ENCODE measurements at regions of chr15 and their contacts with region 1.

Region 1: DNA sequence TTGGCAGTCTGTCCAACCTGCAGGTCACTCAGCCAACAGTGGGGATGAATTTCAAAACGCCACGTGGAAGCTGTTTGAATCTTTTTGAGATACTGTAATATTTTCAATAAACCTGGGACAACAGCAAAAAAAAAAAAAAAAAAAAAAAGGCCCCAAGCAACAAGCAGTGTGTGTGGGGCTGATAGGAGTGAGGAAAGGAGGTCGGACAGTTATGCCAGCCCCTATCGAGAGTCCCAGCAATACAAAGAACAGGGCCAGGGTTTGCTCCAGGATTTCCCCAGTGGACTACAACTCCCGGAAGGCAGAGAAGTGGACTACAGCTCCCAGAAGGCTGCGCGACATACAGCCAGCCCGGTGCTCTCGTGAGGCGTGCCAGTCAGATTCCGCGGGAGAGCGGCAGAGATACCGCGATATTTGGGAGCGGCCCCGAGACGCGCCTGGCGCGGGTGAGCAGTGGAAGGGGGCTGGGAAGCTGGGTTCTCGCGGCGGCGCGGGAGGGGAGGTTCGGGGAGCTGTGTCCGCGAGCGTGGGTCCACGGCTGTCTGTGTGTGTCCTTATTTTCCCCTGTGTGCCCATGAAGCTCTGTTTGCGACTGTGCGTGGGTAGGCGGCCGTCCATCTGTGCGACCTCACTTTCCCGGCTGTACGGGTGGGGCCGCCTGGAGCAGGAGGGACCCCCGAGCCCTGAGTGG is at the start of gene PPCDC:
- DNase-seq: peak; percentile 82 to 95 (median 90)
- ATAC-seq: peak; percentile 100
- H3K4me3 ChIP-seq: peak within 1 kb of the TSS; percentile 91 to 93
- H3K4me3 Mint-ChIP-seq: peak within 1 kb of the TSS; percentile 87 to 99 (median 92)
- H3K27ac ChIP-seq: peak within 1 kb of the TSS; percentile 60
- H3K27ac Mint-ChIP-seq: peak within 1 kb of the TSS; percentile 83 to 94
- H3K4me1 ChIP-seq: peaks cover 5 to 24% of the 10 kb centered on the region in 2 experiments
- H3K4me1 Mint-ChIP-seq: peaks cover 19 to 25% (median 20%) of the 10 kb centered on the region in 3 donors
- H3K27me3 ChIP-seq: no peaks in the 10 kb centered on the region
- H3K27me3 Mint-ChIP-seq: no peaks in the 10 kb centered on the region
- total RNA-seq, gene PPCDC: 9.3 to 14.3 (median 11.8) TPM

Region 2: GRCh38 chr15:74913041-74913440 is 110.3 kb before region 1 on chr15:
- CTCF ChIA-PET with region 1: no interaction called
- POLR2A ChIA-PET with region 1: no interaction called
- DNase-seq: no peak
- ATAC-seq: no peak
- H3K4me3 ChIP-seq: no peak overlapping the region
- H3K4me3 Mint-ChIP-seq: no peak overlapping the region
- H3K27ac ChIP-seq: no peak overlapping the region
- H3K27ac Mint-ChIP-seq: no peak overlapping the region
- H3K4me1 ChIP-seq: no peaks in the 10 kb centered on the region
- H3K4me1 Mint-ChIP-seq: peaks cover 0 to 2% (median 0%) of the 10 kb centered on the region in 3 donors
- H3K27me3 ChIP-seq: no peaks in the 10 kb centered on the region
- H3K27me3 Mint-ChIP-seq: no peaks in the 10 kb centered on the region

Region 3: GRCh38 chr15:75008629-75009326 is 14.5 kb before region 1 on chr15:
- CTCF ChIA-PET with region 1: no interaction called
- POLR2A ChIA-PET with region 1: no interaction called
- DNase-seq: no peak
- ATAC-seq: no peak
- H3K4me3 ChIP-seq: no peak overlapping the region
- H3K4me3 Mint-ChIP-seq: no peak overlapping the region
- H3K27ac ChIP-seq: no peak overlapping the region
- H3K27ac Mint-ChIP-seq: no peak overlapping the region
- H3K4me1 ChIP-seq: no peaks in the 10 kb centered on the region
- H3K4me1 Mint-ChIP-seq: peaks cover 6 to 15% (median 7%) of the 10 kb centered on the region in 3 donors
- H3K27me3 ChIP-seq: peaks cover 0 to 13% of the 10 kb centered on the region in 2 experiments
- H3K27me3 Mint-ChIP-seq: peaks cover 0 to 7% of the 10 kb centered on the region in 2 donors

Region 4: DNA sequence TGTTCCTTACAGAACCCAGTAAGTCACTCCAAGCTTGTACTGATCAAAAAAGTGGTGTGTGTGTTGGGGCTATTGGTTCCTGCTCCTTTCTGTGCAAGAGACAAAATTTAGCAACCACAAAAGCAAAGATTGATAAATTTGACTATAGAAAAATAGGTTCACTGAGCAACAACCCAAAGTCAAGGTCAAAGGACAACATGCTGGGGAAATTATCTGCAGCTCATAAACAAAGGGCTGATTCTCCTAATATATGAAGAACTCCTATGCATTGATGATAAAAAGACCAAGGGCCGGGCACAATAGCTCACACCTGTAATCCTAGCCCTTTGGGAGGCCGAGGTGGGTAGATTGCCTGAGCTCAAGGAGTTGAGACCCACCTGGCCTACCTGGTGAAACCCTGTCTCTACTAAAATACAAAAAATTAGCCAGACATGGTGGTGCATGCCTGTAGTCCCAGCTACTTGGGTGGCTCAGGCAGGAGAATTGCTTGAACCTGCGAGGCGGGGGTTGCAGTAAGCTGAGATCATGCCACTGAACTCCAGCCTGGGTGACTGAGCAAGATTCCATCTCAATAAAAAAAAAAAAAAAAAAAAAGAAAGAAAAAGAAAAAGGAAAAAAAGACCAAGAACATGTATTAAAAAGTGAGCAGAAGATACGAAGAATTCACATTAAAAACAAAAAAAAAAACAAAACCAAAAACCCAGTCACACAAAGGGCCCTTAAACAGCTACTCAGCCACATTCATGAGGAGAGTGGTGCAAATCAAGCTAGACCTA is 29.8 kb after region 1 on chr15:
- CTCF ChIA-PET with region 1: no interaction called
- POLR2A ChIA-PET with region 1: interaction called in 1 of 2 experiments, 15 read pairs
- DNase-seq: no peak
- ATAC-seq: no peak
- H3K4me3 ChIP-seq: no peak overlapping the region
- H3K4me3 Mint-ChIP-seq: no peak overlapping the region
- H3K27ac ChIP-seq: no peak overlapping the region
- H3K27ac Mint-ChIP-seq: no peak overlapping the region
- H3K4me1 ChIP-seq: no peaks in the 10 kb centered on the region
- H3K4me1 Mint-ChIP-seq: no peaks in the 10 kb centered on the region
- H3K27me3 ChIP-seq: no peaks in the 10 kb centered on the region
- H3K27me3 Mint-ChIP-seq: no peaks in the 10 kb centered on the region